ENCODE measurements at regions of chr2 and their contacts with region 1.

Region 1: DNA sequence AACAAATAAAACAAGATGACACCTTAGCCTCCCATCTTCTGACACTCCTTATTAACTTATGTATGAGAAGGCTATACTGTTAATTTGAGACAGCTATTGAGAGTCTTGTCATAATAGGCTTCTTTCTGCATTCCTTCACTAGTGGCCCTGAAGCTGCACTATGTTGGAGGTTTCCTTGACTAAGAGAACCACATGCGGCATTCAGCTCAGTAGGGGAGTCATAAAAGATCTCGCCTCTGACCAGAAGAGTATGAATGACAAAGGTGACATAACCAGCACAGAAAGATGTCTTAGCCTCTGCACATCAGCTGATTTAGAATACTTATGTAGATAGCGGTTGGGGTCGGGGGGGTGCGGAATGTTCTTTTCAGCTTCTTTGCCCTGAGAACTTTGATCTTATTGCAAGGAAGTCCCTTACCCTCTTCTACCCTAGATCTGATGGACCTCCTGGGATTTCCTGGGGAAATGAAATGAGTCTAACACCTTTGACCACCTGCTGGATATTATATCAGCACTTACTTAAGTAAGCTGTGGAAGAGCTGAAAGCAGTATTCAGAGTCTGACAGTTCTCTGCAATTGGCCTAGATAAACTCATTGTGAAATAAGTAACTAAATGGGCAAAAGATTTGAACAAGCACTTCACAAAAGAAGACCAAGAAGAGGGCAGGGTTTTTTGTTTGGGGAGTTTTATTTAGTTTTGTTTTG is 24.2 kb downstream of the RBM45 start:
- DNase-seq: no peak
- ATAC-seq: no peak
- H3K4me3 ChIP-seq: no peak overlapping the region
- H3K4me1 ChIP-seq: no peaks in the 10 kb centered on the region
- CTCF ChIP-seq: no peak

Region 2: GRCh38 chr2:178018141-178018540 is 118.3 kb before region 1 on chr2:
- intact Hi-C with region 1: no loop called
- DNase-seq: no peak
- ATAC-seq: no peak
- H3K4me3 ChIP-seq: no peak overlapping the region
- H3K4me1 ChIP-seq: no peaks in the 10 kb centered on the region
- CTCF ChIP-seq: no peak

Region 3: GRCh38 chr2:178280244-178280852 is 143.9 kb after region 1 on chr2:
- intact Hi-C with region 1: loop called (anchors 10 kb)
- DNase-seq: peak in 1 of 3 donors; percentile 74
- ATAC-seq: peak; percentile 45
- H3K4me3 ChIP-seq: no peak overlapping the region
- H3K4me1 ChIP-seq: no peaks in the 10 kb centered on the region
- CTCF ChIP-seq: peak; percentile 65

Region 4: DNA sequence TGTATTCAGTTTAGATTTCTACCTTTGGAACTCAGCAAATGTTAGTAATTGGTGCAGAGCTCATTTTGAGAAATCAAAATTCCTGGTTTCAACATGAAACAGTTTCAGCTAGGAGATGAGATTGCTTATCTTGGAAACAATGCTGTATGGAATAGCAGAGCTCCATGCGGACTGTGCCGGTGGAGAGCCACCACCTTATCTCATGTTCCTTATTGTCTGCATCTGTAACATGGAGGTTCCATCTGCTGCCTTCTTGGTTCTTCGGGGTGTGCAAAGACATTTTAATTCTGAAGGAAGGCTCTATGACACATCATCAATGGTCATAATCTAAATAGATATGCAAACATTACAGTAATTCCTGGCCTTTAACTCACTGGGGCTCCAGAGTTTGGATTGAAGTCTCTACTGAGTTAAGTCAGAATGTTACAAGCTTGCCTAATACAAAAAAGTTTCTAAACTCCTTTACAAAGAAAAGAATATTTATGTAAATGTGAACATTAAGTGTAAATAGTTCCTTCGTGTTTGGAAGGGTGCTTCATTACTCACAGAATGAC is 249.2 kb after region 1 on chr2:
- intact Hi-C with region 1: no loop called
- DNase-seq: no peak
- ATAC-seq: no peak
- H3K4me3 ChIP-seq: no peak overlapping the region
- H3K4me1 ChIP-seq: no peaks in the 10 kb centered on the region
- CTCF ChIP-seq: no peak

Measured in mucosa of descending colon (tissue), 3 donors.